Vagina (tissue), 2 donors: ENCODE measurements at regions of chr6 and their contacts with region 1.

Region 1: GRCh38 chr6:57267586-57268293 is 45.6 kb upstream of the RAB23 start:
- DNase-seq: no peak
- H3K4me3 ChIP-seq: no peak overlapping the region
- H3K27ac ChIP-seq: peak overlapping the region; percentile 49
- H3K4me1 ChIP-seq: peaks cover 6% of the 10 kb centered on the region
- H3K27me3 ChIP-seq: no peaks in the 10 kb centered on the region
- CTCF ChIP-seq: peak in 1 of 3 experiments; percentile 20
- POLR2A ChIP-seq: no peak

Region 2: GRCh38 chr6:56902641-56903464 is 364.9 kb before region 1 on chr6:
- intact Hi-C with region 1: no loop called
- DNase-seq: no peak
- H3K4me3 ChIP-seq: no peak overlapping the region
- H3K27ac ChIP-seq: peak overlapping the region; percentile 42
- H3K4me1 ChIP-seq: no peaks in the 10 kb centered on the region
- H3K27me3 ChIP-seq: no peaks in the 10 kb centered on the region
- CTCF ChIP-seq: peak; percentile 13 to 83 (median 36)
- POLR2A ChIP-seq: no peak

Region 3: DNA sequence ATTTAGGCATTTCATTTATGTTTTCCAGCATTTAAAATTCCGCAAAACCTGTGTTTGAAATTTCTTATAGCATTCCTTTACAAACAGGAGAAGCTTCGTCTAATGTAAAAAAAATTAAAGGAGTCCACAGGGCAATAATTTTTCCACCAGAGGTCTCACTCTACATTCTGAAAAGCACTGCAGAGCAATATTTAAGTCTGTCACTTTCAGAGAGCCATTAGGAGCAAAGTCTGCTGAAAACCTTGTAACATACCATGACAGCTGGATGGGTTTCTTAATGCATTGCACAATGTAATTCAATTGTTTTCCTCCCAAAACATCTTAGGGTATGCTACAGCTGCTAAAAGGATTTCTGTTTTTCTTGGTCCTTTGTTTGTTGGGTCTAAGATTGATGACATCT is 77.6 kb before region 1 on chr6:
- intact Hi-C with region 1: no loop called
- DNase-seq: no peak
- H3K4me3 ChIP-seq: no peak overlapping the region
- H3K27ac ChIP-seq: no peak overlapping the region
- H3K4me1 ChIP-seq: no peaks in the 10 kb centered on the region
- H3K27me3 ChIP-seq: no peaks in the 10 kb centered on the region
- CTCF ChIP-seq: peak in 1 of 3 experiments; percentile 23
- POLR2A ChIP-seq: no peak

Region 4: DNA sequence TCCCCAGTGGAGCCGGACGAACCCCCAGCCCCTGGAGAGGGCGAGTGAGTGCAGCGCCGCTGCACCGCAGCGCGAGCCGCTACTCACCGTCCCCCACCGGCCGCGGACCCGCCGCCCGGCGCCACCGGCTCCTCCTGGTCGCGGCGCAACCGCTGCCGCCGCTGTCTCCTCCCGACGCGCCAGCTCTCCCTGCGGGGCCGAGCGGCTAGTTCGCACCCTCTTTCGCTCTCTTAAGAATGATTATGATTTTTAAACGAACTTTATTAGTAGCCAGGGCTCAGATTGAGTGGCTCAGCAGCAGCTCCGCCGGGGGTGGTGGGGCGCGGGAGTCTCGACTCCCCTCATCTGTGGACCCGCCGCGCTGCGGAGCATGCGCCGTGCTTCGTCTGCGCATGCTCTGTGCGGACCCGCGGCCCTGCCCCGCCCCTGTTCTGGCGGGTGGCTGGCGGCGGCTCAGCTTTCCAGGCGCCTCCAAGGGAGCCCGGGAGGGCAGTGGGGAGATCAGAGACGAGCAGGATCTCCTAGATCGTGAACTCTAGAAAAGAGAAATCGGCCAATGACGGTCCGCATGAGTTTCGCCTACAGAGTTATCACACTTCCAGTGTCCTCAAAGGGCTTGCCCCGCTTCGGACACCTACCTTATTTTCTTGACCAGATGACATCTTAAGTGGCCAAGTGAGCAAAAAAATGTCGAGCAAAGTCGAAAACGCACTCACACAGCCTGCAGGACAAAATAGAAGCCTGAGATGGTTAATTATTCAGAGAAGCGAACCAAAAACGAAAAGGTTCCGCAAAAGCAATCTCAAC is 45.6 kb before region 1 on chr6 and contains the start of gene RAB23:
- intact Hi-C with region 1: loop called (anchors 5 kb)
- DNase-seq: no peak
- H3K4me3 ChIP-seq: peak within 1 kb of the TSS; percentile 87 to 99
- H3K27ac ChIP-seq: peak within 1 kb of the TSS; percentile 97
- H3K4me1 ChIP-seq: peaks cover 35% of the 10 kb centered on the region
- H3K27me3 ChIP-seq: no peaks in the 10 kb centered on the region
- CTCF ChIP-seq: no peak
- POLR2A ChIP-seq: peak in 1 of 2 donors; percentile 92
- total RNA-seq, gene RAB23: 31.4 TPM